ENCODE measurements at regions of chr10 and their contacts with region 1.

Region 1: GRCh38 chr10:75444781-75445386 is 13.5 kb downstream of the LRMDA start:
- DNase-seq: no peak
- H3K4me3 ChIP-seq: no peak overlapping the region
- H3K27ac ChIP-seq: no peak overlapping the region
- H3K4me1 ChIP-seq: peaks cover 8% of the 10 kb centered on the region; the same call in 1 of the 2 replicates
- H3K27me3 ChIP-seq: no peaks in the 10 kb centered on the region
- CTCF ChIP-seq: no peak

Region 2: GRCh38 chr10:76463111-76463510 is 1018.2 kb after region 1 on chr10:
- CTCF ChIA-PET with region 1: no interaction called
- POLR2A ChIA-PET with region 1: interaction called, 12 read pairs
- intact Hi-C with region 1: no loop called
- DNase-seq: no peak
- H3K4me3 ChIP-seq: no peak overlapping the region
- H3K27ac ChIP-seq: no peak overlapping the region
- H3K4me1 ChIP-seq: no peaks in the 10 kb centered on the region
- H3K27me3 ChIP-seq: no peaks in the 10 kb centered on the region
- CTCF ChIP-seq: no peak

Measured in PC-9 (cell line).